ENCODE measurements at regions of chr11 and their contacts with region 1.

Region 1: DNA sequence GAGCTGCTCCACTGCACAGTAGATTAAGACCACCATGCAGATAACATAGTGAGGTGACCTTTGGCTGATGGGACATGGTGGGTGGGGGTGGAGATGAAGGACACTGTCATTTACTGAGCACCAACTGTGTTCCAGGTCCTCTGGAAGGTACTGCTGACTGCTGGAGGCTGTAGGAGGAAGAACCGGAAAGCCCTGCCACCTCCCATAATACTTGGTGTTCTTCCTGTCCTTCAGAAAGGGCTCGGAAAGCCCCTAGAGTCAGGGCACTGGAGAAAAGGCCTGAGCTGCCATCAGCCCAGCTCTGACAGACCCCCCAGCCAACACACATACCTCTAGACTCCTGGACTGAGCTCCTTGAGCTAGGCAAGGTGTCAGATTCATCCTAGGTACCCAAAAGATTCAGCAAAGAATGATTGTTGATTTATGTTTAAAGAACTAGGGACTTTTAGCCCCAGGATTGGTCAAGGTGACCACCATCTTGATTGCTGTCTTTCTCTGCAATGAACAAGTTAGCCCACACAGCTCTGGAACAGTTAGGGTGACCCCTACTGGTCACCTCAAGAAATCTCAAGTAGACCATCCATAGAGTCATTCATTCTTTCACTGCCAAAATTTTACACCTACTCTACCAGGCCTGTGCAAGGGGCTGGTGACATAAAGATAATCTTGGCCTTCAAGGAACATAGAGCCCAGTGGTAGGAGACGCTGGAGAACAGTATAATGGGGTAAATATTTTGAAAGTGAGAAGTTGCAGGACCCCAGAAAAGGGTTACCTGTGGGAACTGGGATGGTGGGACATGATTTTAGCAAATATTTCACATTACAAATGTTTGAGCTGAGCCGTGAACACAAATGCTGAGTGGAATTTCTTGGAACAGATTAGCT is 39.4 kb downstream of the IRAG1 start:
- DNase-seq: peak; percentile 74
- H3K4me3 ChIP-seq: no peak overlapping the region
- H3K27ac ChIP-seq: no peak overlapping the region
- H3K4me1 ChIP-seq: peaks cover 42% of the 10 kb centered on the region
- H3K27me3 ChIP-seq: no peaks in the 10 kb centered on the region

Region 2: DNA sequence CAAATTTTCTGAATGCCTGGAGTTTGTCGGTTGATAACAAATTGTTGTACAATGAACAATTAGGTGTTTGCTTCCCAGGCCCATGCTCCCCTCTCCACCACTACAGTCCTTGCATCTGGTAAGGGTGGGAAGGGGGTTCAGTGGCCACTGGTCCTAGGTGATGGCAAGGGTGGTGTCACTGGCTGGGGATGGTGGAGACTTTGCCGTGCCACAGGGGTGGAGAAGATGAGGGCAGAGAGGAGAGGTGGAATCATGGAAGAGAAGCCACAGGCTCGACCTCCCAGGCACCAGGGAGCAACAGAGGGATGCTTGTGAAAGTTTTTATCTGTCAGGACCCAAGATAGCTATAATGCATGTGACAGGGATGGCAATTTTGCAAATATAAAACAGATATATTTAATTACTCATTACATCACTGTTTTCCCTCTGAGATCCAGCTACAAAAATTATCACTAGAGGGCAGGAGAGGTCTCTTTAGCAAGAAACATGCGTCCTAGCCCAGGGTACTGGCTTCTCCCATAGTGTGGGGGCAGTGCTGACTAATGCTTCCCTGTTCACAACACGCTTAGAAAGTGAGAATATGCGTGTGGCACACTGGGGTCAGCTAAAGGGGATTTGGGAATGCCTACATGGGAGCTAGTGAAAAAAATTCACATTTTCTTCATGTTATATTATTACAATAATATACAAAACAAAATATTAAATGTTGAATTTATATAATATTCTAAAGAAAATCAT is 248.1 kb before region 1 on chr11:
- in situ Hi-C with region 1: loop called (anchors 10 kb)
- DNase-seq: peak; percentile 96
- H3K4me3 ChIP-seq: no peak overlapping the region
- H3K27ac ChIP-seq: peak overlapping the region; percentile 47
- H3K4me1 ChIP-seq: peaks cover 22% of the 10 kb centered on the region
- H3K27me3 ChIP-seq: no peaks in the 10 kb centered on the region

Region 3: GRCh38 chr11:10857709-10858438 is 203.7 kb after region 1 on chr11 and contains the start of gene ZBED5:
- in situ Hi-C with region 1: no loop called
- DNase-seq: peak; percentile 99
- H3K4me3 ChIP-seq: peak within 1 kb of the TSS; percentile 89
- H3K27ac ChIP-seq: peak within 1 kb of the TSS; percentile 98
- H3K4me1 ChIP-seq: peaks cover 20% of the 10 kb centered on the region
- H3K27me3 ChIP-seq: no peaks in the 10 kb centered on the region
- total RNA-seq, gene ZBED5: 25.6 and 32.4 TPM in 2 replicates

Measured in GM23248 (cell line).